WTC11 (cell line): ENCODE measurements at regions of chr3 and their contacts with region 1.

Region 1: GRCh38 chr3:185659942-185660921 is 74.1 kb downstream of the SENP2 start:
- DNase-seq: peak; percentile 88
- ATAC-seq: peak; percentile 90
- H3K4me3 Mint-ChIP-seq: no peak overlapping the region
- H3K27ac Mint-ChIP-seq: no peak overlapping the region; the same call in 1 of the 2 replicates
- H3K4me1 Mint-ChIP-seq: peaks cover 12% of the 10 kb centered on the region
- H3K27me3 Mint-ChIP-seq: no peaks in the 10 kb centered on the region; the same call in 1 of the 2 replicates
- CTCF ChIP-seq: peak; percentile 99

Region 2: GRCh38 chr3:185341616-185342457 is 318.4 kb before region 1 on chr3:
- CTCF ChIA-PET with region 1: no interaction called
- POLR2A ChIA-PET with region 1: no interaction called
- DNase-seq: no peak
- ATAC-seq: no peak
- H3K4me3 Mint-ChIP-seq: no peak overlapping the region
- H3K27ac Mint-ChIP-seq: no peak overlapping the region
- H3K4me1 Mint-ChIP-seq: no peaks in the 10 kb centered on the region
- H3K27me3 Mint-ChIP-seq: peaks cover 3% of the 10 kb centered on the region; the same call in 1 of the 2 replicates
- CTCF ChIP-seq: no peak

Region 3: GRCh38 chr3:185519021-185519420 is 141.2 kb before region 1 on chr3:
- CTCF ChIA-PET with region 1: no interaction called
- POLR2A ChIA-PET with region 1: no interaction called
- DNase-seq: no peak
- ATAC-seq: peak; percentile 78
- H3K4me3 Mint-ChIP-seq: no peak overlapping the region
- H3K27ac Mint-ChIP-seq: no peak overlapping the region
- H3K4me1 Mint-ChIP-seq: no peaks in the 10 kb centered on the region
- H3K27me3 Mint-ChIP-seq: peaks cover 9% of the 10 kb centered on the region
- CTCF ChIP-seq: no peak

Region 4: DNA sequence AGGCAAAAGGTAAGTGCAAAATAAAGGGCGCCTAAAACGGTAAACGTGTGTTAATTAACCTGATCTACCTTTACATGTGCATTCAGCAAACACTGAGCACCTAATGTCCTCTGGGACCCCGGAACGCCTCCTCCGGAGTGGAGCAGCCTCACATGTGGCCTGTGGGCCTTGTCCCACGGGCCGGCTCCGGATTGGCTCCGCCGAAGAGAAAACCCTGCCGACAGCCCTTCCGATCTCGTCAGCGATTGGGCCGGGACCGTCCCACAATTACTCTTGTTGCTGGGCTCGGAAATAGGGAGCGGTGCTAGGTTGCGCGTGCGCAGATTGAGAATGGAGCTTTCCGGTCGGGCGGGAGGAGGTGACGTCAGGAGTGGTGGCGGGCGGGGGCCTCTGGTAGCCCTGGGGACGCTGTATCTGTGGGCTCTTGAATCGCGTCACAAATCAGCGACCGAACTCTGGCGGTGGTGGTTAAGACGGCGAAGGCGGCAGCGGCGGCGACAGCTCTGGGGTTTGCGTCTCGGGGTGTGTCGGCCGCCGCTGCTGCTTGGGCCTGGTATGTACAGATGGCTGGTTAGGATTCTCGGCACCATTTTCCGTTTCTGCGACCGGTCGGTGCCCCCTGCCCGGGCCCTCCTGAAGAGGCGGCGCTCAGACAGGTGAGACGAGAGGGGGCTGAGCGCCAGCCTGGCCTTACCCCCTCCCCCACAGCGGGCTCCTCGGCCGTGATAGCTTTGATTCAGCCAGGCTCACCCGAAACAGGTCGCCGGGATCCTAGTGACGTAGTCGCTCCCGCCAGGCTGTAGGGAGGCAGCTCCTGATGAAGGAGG is 74.2 kb before region 1 on chr3 and contains the start of gene SENP2:
- CTCF ChIA-PET with region 1: interaction called, 14 read pairs
- POLR2A ChIA-PET with region 1: interaction called, 4 read pairs
- DNase-seq: peak; percentile 99
- ATAC-seq: peak; percentile 87
- H3K4me3 Mint-ChIP-seq: peak within 1 kb of the TSS; percentile 89
- H3K27ac Mint-ChIP-seq: peak within 1 kb of the TSS; percentile 99
- H3K4me1 Mint-ChIP-seq: peaks cover 37% of the 10 kb centered on the region
- H3K27me3 Mint-ChIP-seq: no peaks in the 10 kb centered on the region; the same call in 1 of the 2 replicates
- CTCF ChIP-seq: no peak
- total RNA-seq, gene SENP2: 55.0 to 57.2 TPM (median 56.9 TPM) in 3 replicates

Region 5: GRCh38 chr3:185696039-185696438 is 35.8 kb after region 1 on chr3:
- CTCF ChIA-PET with region 1: interaction called, 22 read pairs
- POLR2A ChIA-PET with region 1: no interaction called
- DNase-seq: no peak
- ATAC-seq: no peak
- H3K4me3 Mint-ChIP-seq: no peak overlapping the region
- H3K27ac Mint-ChIP-seq: peak overlapping the region; percentile 51; the same call in 1 of the 2 replicates
- H3K4me1 Mint-ChIP-seq: peaks cover 5% of the 10 kb centered on the region
- H3K27me3 Mint-ChIP-seq: no peaks in the 10 kb centered on the region
- CTCF ChIP-seq: no peak

Region 6: DNA sequence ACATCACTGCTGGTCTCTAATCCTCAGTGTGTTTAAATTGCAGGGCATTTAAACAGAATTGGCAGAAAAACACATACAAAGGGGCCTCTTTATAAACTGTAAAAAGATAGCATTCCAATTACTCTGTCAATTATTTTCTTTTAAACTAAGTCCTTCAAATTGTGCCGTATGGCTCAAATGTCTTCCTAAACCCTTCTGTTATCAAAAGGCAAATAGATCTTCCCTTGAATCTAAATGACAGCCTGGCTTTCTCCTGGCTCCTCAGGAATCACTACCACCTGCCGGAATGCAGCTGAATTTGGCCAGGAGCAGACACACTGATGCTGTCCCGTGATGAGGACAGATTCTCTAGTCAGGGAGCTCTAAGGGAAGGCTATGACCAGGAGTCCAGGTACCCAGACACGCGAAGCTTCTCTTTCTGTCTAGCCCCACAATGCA is 79.1 kb after region 1 on chr3:
- CTCF ChIA-PET with region 1: interaction called, 48 read pairs
- POLR2A ChIA-PET with region 1: no interaction called
- DNase-seq: no peak
- ATAC-seq: peak; percentile 83
- H3K4me3 Mint-ChIP-seq: no peak overlapping the region
- H3K27ac Mint-ChIP-seq: peak overlapping the region; percentile 5; the same call in 1 of the 2 replicates
- H3K4me1 Mint-ChIP-seq: peaks cover 57% of the 10 kb centered on the region
- H3K27me3 Mint-ChIP-seq: no peaks in the 10 kb centered on the region
- CTCF ChIP-seq: no peak

Region 7: GRCh38 chr3:185781759-185782158 is 121.5 kb after region 1 on chr3:
- CTCF ChIA-PET with region 1: interaction called, 15 read pairs
- POLR2A ChIA-PET with region 1: no interaction called
- DNase-seq: no peak
- ATAC-seq: no peak
- H3K4me3 Mint-ChIP-seq: no peak overlapping the region
- H3K27ac Mint-ChIP-seq: peak overlapping the region; percentile 62; the same call in 1 of the 2 replicates
- H3K4me1 Mint-ChIP-seq: peaks cover 92% of the 10 kb centered on the region
- H3K27me3 Mint-ChIP-seq: no peaks in the 10 kb centered on the region
- CTCF ChIP-seq: no peak

Region 8: GRCh38 chr3:185867650-185868049 is 207.4 kb after region 1 on chr3:
- CTCF ChIA-PET with region 1: interaction called, 11 read pairs
- POLR2A ChIA-PET with region 1: no interaction called
- DNase-seq: no peak
- ATAC-seq: no peak
- H3K4me3 Mint-ChIP-seq: no peak overlapping the region
- H3K27ac Mint-ChIP-seq: no peak overlapping the region
- H3K4me1 Mint-ChIP-seq: peaks cover 9% of the 10 kb centered on the region
- H3K27me3 Mint-ChIP-seq: no peaks in the 10 kb centered on the region
- CTCF ChIP-seq: no peak

Region 9: DNA sequence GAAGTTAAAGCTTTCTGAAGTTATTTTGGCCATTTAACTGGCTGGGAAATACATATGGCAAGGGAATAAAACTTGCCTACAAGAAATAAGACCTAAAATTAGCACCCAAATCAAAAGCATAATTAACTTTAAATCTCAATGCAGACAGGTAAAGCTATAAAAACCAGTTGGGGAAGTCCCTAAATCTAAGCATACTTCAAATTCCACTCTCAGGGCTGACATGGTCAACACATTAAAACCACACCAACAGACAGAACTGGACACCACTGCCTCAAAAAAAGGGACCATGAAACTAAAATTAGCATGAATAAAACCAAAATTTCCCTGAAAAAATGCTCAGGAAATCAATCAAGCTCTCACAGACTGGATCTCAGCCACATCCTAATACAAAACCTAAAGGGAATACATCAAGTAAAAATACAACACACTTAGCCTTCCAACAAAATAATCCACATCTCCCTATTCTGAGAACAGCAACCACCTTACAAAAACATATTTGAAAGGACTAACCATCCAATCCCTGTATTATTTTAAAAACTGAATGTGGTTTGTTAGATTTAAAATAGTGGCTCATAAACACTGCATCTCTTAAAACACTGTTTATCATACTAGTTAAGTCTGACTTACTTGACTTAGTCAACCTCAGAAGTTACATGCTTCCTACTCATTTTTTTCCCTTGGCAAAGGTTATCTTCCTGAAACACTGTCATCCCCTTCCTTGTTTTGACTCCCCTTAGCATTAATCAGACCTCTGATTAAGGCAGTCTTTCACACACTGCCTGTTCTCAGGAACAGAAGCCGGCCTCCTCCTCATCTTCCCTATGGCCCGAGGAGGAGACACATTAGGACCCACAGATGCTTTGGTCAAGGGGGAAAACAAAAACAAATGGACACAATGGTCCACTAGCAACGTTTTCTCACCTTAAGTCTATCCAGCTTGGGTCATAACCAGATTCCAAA is 269.2 kb after region 1 on chr3:
- CTCF ChIA-PET with region 1: interaction called, 18 read pairs
- POLR2A ChIA-PET with region 1: no interaction called
- DNase-seq: no peak
- ATAC-seq: peak; percentile 21; the same call in 1 of the 2 replicates
- H3K4me3 Mint-ChIP-seq: peak overlapping the region; percentile 100
- H3K27ac Mint-ChIP-seq: peak overlapping the region; percentile 79
- H3K4me1 Mint-ChIP-seq: peaks cover 92% of the 10 kb centered on the region
- H3K27me3 Mint-ChIP-seq: no peaks in the 10 kb centered on the region
- CTCF ChIP-seq: no peak